Caco-2 (cell line): ENCODE measurements at regions of chr17 and their contacts with region 1.

Region 1: DNA sequence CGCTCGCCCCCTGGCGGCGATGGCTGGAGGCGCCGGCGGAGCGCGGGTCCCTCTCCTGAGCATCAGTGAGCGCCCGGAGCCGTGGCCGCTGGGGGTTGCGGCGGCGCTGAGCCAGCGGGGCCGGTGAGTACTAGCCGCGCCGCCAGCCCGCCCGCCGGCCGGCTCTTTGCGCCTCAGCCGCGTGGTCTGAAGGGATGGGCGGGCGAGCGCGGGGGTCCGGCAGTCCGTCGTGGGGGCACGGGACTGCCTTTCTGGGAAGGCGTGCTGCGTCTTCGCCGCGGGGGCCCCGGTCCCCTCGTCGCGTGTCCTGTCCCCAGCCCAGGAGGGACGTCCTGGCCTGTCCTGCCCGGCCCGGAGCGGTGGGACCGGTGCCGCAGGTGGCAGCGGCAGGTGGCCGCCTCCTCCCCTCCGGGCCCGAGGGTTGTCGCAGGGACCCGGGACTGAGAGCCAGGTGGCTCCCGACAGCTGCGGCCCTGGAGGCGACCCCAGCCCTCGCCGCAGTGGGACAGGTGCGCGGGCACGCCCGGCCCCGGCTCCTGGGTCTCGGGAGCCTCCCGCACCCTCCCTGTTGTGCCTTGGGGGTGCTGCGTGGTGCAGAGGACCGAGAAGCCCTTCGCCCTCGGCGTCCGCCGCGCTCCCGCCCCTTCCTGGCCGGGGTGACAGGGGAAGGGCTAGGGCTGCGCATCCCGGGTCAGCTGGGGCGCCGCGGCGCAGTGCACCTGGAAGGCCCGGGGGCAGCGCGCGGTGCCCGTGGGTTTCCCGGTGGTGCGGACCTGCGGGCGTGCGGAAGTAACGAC is at the start of gene SPECC1:
- DNase-seq: peak; percentile 81 to 96
- H3K4me3 ChIP-seq: peak within 1 kb of the TSS; percentile 72
- H3K4me3 Mint-ChIP-seq: peak within 1 kb of the TSS; percentile 96
- H3K27ac Mint-ChIP-seq: no peak within 1 kb of the TSS
- H3K4me1 ChIP-seq: no peaks in the 10 kb centered on the region; the same call in 1 of the 2 replicates
- H3K4me1 Mint-ChIP-seq: peaks cover 17% of the 10 kb centered on the region
- H3K27me3 ChIP-seq: peaks cover 2% of the 10 kb centered on the region
- H3K27me3 Mint-ChIP-seq: peaks cover 38% of the 10 kb centered on the region
- CTCF ChIP-seq: peak in 1 of 2 experiments; percentile 97
- total RNA-seq, gene SPECC1: 111 and 123 TPM in 2 replicates

Region 2: DNA sequence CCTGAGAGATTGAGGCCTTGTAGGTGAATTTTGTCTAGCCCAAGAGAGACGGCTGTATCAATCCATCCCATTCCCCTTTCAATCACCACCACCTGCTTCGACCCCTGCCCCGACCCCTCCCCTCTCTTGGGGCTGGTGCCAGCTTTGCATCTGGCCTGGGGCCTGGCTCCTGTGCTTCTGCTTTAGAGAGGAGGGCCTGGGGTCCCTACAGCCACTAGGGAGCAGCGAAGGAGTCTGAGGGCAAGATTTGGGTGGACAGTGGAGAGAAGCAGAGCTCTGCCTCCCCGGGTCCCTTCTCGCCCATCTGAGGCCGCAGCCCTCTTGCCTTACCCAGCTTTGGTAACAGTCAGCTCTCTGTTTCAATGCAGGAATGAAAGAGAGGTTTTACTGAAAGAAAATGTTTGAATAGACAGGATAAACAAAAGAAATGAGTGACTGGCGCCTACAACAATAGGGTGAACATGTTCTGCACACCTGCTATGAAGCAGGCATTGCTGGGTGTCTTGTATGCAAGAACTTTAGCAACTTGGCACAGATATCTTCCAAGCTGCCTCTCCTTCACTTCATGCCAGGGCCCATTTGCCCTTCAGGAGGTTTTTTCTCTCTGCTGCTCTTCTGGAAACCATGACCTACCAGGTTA is 418.5 kb before region 1 on chr17:
- CTCF ChIA-PET with region 1: no interaction called
- POLR2A ChIA-PET with region 1: interaction called, 11 read pairs
- intact Hi-C with region 1: no loop called
- DNase-seq: peak in 1 of 2 experiments; percentile 18
- H3K4me3 ChIP-seq: no peak overlapping the region
- H3K4me3 Mint-ChIP-seq: no peak overlapping the region
- H3K27ac Mint-ChIP-seq: no peak overlapping the region
- H3K4me1 ChIP-seq: no peaks in the 10 kb centered on the region
- H3K4me1 Mint-ChIP-seq: no peaks in the 10 kb centered on the region
- H3K27me3 ChIP-seq: no peaks in the 10 kb centered on the region
- H3K27me3 Mint-ChIP-seq: no peaks in the 10 kb centered on the region
- CTCF ChIP-seq: peak in 1 of 2 experiments; percentile 30

Region 3: DNA sequence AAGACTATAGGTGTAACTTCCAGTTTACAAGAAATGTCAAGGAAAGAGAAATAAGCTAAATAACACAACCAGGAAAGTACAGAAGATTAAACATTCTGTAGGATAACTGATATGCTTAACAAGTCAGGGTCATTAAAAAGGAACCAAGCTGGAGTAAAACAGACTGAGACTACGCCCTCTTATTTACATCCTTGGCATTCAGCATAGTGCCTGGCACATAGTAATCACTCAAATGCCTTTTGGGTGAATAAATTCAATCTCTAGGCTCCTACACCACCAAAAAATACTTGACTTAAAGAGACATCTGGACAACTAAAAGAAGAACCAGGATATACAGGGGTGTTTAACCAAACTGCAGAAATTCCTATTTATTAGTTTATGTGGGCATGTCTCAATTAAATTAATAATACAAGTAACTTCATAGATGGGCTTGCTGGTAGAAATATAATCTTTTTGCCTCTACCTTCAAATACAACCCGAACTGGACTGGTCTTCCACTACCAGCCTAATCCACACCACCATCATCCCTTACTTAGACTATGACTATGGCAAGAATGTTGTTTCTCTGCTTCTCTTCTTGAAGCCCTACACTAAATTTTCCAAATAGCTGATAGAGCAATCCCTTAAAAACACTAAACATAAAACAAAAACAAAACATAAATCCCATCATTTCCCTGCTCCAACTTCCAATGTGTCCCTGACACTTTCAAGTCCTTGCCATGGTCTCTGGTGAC is 94.1 kb before region 1 on chr17:
- CTCF ChIA-PET with region 1: no interaction called
- POLR2A ChIA-PET with region 1: no interaction called
- intact Hi-C with region 1: no loop called
- DNase-seq: no peak
- H3K4me3 ChIP-seq: no peak overlapping the region
- H3K4me3 Mint-ChIP-seq: no peak overlapping the region
- H3K27ac Mint-ChIP-seq: no peak overlapping the region
- H3K4me1 ChIP-seq: no peaks in the 10 kb centered on the region
- H3K4me1 Mint-ChIP-seq: no peaks in the 10 kb centered on the region
- H3K27me3 ChIP-seq: no peaks in the 10 kb centered on the region
- H3K27me3 Mint-ChIP-seq: no peaks in the 10 kb centered on the region
- CTCF ChIP-seq: no peak

Region 4: DNA sequence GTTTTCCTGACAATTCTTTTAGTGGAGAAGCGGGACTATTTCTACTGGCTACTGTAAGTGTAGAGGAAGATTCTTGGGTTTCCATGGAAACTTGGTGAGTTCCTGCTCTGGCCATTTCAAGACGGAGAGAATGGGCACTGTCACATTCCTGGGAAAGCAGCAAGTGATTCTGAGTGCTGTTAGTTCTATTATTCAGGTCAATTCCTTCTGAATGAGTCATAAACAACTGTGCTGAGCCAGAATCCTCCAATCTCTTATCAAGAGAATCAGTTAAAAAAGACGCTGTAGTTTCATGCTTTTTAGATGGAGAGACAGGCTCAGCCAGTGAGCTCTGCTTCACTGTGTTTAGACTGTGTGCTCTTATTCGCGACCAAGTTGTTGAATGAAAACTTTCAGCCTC is 51.5 kb before region 1 on chr17:
- CTCF ChIA-PET with region 1: no interaction called
- POLR2A ChIA-PET with region 1: no interaction called
- intact Hi-C with region 1: no loop called
- DNase-seq: peak; percentile 56 to 60
- H3K4me3 ChIP-seq: no peak overlapping the region
- H3K4me3 Mint-ChIP-seq: peak overlapping the region; percentile 60
- H3K27ac Mint-ChIP-seq: peak overlapping the region; percentile 80
- H3K4me1 ChIP-seq: peaks cover 20% of the 10 kb centered on the region
- H3K4me1 Mint-ChIP-seq: peaks cover 14% of the 10 kb centered on the region
- H3K27me3 ChIP-seq: no peaks in the 10 kb centered on the region
- H3K27me3 Mint-ChIP-seq: no peaks in the 10 kb centered on the region
- CTCF ChIP-seq: no peak

Region 5: DNA sequence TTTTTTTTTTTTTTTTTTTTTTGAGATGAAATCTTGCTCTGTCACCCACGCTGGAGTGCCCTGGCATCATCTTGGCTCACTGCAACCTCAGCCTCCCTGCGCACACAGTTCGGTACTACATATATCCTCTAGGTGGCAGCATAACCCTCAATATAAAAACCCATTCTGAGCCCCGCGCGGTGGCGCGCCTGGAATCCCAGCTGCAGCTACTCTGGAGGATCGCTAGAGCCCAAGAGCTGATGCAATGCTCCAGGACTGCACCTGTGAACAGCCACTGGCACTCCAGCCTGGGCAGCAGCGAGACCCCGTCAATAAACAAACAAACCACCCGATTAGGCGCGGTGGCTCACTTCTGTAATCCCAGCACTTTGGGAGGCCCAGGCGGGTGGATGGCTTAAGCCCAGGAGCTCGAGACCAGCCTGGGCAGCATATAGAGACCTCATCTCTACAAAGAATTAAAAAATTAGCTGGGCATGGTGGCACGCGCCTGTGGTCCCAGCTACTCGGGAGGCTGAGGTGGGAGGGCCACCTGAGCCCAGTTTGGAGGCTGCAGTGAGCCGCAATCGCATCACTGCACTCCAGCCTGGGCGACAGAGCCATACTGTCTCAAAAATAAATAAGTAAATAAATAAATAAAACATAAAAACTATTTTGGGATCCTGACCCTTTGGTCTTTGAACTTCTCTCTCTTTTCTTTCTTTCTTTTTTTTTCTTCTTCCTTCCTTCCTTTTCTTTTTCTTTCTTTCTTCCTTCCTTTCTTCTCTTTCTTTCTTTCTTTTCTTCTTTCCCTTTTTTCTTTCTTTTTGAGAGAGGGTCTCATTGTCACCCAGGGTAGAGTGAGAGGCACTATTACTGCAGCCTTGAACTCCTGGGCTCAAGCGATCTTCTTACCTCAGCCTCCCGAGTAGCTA is 16.4 kb before region 1 on chr17:
- CTCF ChIA-PET with region 1: interaction called, 60 read pairs
- POLR2A ChIA-PET with region 1: interaction called, 3 read pairs
- intact Hi-C with region 1: loop called (anchors 1 kb)
- DNase-seq: peak; percentile 93
- H3K4me3 ChIP-seq: no peak overlapping the region
- H3K4me3 Mint-ChIP-seq: peak overlapping the region; percentile 66
- H3K27ac Mint-ChIP-seq: peak overlapping the region; percentile 71
- H3K4me1 ChIP-seq: peaks cover 4% of the 10 kb centered on the region; the same call in 1 of the 2 replicates
- H3K4me1 Mint-ChIP-seq: peaks cover 7% of the 10 kb centered on the region
- H3K27me3 ChIP-seq: no peaks in the 10 kb centered on the region
- H3K27me3 Mint-ChIP-seq: no peaks in the 10 kb centered on the region
- CTCF ChIP-seq: peak; percentile 76 to 80

Region 6: GRCh38 chr17:20095336-20096080 is 86.0 kb after region 1 on chr17:
- CTCF ChIA-PET with region 1: interaction called, 24 read pairs
- POLR2A ChIA-PET with region 1: no interaction called
- intact Hi-C with region 1: loop called (anchors 5 kb)
- DNase-seq: peak; percentile 64 to 69
- H3K4me3 ChIP-seq: no peak overlapping the region
- H3K4me3 Mint-ChIP-seq: peak overlapping the region; percentile 22
- H3K27ac Mint-ChIP-seq: no peak overlapping the region
- H3K4me1 ChIP-seq: no peaks in the 10 kb centered on the region
- H3K4me1 Mint-ChIP-seq: no peaks in the 10 kb centered on the region
- H3K27me3 ChIP-seq: no peaks in the 10 kb centered on the region; the same call in 1 of the 2 replicates
- H3K27me3 Mint-ChIP-seq: peaks cover 15% of the 10 kb centered on the region
- CTCF ChIP-seq: peak; percentile 24 to 78

Region 7: GRCh38 chr17:20103454-20104446 is 94.2 kb after region 1 on chr17:
- CTCF ChIA-PET with region 1: no interaction called
- POLR2A ChIA-PET with region 1: no interaction called
- intact Hi-C with region 1: loop called (anchors 5 kb)
- DNase-seq: peak in 1 of 2 experiments; percentile 41
- H3K4me3 ChIP-seq: no peak overlapping the region
- H3K4me3 Mint-ChIP-seq: peak overlapping the region; percentile 32
- H3K27ac Mint-ChIP-seq: peak overlapping the region; percentile 83
- H3K4me1 ChIP-seq: no peaks in the 10 kb centered on the region
- H3K4me1 Mint-ChIP-seq: peaks cover 8% of the 10 kb centered on the region
- H3K27me3 ChIP-seq: no peaks in the 10 kb centered on the region
- H3K27me3 Mint-ChIP-seq: no peaks in the 10 kb centered on the region
- CTCF ChIP-seq: no peak